ENCODE measurements at regions of chr20 and their contacts with region 1.

Region 1: DNA sequence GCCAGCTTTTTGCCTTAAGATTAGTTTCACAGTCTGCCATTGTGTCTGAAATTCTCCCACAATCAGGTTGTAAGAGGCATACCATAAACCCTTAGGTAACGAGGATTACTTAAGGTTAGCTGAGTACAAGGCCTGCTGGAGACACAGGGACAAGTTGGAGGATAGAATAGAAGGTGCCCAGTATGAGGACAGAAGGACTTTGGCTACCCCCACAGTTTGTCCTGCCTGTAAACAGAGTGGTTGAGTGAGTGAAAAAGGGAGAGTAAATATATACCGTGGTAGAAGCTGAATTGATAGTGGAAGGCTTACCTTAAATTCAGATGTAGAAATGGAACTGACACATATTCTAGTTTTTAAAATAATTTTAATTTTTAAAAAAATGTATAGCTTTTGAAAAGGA is 19.3 kb downstream of the RPRD1B start:
- DNase-seq: no peak
- ATAC-seq: no peak
- H3K4me3 Mint-ChIP-seq: no peak overlapping the region
- H3K27ac Mint-ChIP-seq: no peak overlapping the region
- H3K4me1 Mint-ChIP-seq: peaks cover 23% of the 10 kb centered on the region
- H3K27me3 Mint-ChIP-seq: no peaks in the 10 kb centered on the region

Region 2: DNA sequence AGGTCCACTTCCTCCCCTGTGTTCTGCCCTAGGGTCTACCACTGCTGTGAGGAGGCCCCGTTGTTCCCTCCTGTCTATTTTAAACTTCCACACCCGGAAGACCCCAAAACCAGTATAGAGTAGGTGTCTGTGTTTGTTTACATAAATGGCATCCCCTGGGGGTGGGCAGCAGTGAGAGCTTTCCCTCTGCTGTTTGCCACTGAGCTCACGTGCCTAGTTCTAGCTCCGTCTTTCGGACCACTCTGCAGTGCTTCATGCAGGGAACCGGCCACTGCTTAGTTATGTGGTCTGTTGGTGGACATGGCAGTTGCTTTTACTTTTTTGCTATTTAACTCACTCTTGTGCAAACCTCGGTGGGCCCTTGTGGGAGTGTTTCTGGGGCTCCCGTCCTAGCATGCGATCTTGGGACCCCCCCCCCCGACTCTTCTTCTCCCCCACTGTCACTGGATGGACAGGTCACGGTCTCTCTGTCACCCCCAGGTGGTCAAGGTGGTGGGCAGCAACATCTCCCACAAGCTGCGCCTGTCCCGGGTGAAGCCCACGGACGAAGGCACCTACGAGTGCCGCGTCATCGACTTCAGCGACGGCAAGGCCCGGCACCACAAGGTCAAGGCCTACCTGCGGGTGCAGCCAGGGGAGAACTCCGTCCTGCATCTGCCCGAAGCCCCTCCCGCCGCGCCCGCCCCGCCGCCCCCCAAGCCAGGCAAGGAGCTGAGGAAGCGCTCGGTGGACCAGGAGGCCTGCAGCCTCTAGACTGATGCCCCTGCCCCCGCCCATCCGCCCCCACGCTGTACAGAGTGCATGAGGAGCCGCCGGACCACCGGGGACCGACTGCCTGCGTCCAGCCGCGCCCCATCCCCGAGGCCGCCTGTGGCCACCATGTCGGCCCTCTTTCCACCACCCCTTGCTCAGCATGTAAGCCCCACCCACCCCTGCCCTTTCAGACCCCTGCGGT is 109.1 kb before region 1 on chr20:
- POLR2A ChIA-PET with region 1: interaction called, 13 read pairs
- DNase-seq: no peak
- ATAC-seq: no peak
- H3K4me3 Mint-ChIP-seq: no peak overlapping the region
- H3K27ac Mint-ChIP-seq: no peak overlapping the region
- H3K4me1 Mint-ChIP-seq: no peaks in the 10 kb centered on the region
- H3K27me3 Mint-ChIP-seq: no peaks in the 10 kb centered on the region